Sciatic nerve (tissue), 2 donors: ENCODE measurements at regions of chr3 and their contacts with region 1.

Region 1: DNA sequence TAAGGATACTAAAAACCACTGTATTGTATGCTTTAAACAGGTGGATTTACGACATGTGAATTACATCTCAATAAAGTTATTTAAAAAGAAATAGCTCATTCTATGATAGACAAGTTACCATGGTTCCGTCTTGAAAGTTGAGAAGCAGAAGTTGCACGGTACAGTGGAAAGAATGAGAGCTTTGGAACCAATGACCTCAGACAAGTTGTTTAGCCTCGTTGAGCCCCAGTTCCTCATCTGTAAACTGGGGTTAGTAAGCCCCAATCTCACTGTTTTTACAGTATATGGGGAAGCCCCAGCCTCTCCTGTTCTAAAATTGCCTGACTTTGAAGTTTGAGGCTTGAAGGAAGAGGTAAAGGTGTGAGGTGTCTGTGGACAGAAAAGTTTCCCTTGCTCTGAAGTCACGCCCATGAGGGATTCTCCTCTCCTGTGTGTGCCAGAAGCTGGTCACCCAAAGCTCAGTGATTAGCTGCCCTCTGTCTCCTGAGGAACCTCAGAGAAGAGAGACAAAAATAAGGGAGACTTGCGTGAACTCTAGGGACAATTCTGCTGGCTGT is 10.0 kb downstream of the CRYGS start:
- DNase-seq: no peak
- ATAC-seq: peak; percentile 81

Region 2: GRCh38 chr3:185637388-185637787 is 896.8 kb before region 1 on chr3:
- intact Hi-C with region 1: no loop called
- DNase-seq: no peak
- ATAC-seq: no peak

Region 3: DNA sequence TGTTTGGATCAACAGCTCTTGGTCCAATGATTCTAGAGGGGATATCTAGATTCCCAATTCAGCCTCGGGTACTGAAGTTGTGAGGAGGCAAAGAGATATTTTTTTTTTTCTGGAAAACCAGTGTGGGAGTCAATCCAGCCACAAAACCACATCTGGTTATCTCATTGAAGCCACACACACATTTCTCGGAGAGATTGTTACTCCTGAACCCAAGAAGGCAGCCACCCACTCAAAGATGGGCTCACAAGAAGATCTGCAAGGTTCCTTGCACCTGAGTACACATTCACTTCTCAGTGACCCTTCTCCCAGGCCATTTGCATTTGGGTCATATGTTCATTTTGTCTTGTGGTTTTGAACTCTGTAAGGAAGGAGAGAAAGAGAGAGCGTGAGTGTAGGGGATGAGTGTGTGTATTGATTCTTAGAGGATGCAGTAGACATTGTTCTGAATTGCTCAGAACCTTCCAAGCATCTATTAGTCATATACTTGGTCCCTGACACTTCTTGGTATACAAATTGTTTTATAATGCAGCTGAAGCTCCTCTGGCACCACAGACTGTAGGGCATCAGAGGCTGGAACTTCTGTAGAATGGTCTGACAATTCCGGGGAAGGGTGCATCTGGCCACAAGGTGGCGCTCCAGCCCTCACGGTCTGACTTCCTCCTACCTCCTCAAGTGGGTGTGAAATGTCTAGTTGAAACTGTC is 557.1 kb before region 1 on chr3:
- intact Hi-C with region 1: loop called (anchors 5 kb)
- DNase-seq: peak; percentile 90
- ATAC-seq: peak; percentile 77

Region 4: GRCh38 chr3:186259612-186260383 is 274.4 kb before region 1 on chr3:
- intact Hi-C with region 1: loop called (anchors 10 kb)
- DNase-seq: peak; percentile 71
- ATAC-seq: peak; percentile 91

Region 5: DNA sequence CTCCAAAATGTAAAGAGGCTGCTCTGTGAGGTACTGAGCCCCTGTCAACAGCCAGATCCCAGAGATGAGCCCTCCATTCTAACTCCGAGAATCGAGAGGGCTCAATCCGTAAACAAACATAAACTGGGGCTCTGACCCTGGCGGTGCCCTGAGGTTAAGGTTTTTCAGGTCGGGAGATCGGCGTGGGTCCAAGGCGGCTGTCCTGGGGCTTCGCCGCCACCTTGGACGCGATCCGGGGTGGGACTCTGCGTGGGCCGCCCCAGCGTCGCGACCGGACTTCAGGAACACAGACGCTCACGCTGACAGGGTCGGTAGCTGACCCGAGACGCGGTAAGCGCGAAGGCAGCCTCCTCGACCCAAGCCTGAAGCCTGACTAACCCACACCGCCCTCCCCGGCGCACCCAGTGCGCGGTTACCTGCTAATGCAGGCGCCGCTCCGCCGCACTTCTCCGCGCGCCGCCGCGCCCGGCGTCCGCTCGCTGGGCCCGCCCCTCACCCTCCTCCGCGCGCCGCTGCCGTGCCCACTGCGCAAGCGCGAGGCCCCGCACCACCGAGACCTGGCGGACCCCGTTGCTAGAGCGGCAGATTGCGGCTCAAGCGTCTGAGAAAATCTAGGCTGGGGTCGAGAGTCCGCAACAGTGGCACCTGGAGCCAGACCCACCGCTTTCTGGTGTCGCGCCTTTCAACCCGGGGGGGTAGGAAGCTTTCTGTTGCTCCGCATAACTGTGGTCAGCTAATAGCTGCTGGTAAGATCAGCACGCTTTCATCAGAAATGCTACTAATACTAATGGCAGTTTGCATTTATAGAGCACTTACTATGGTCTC is 32.9 kb after region 1 on chr3 and contains the start of gene TBCCD1:
- intact Hi-C with region 1: no loop called
- DNase-seq: peak; percentile 94
- ATAC-seq: peak; percentile 81
- total RNA-seq, gene TBCCD1: 12.9 TPM

Region 6: DNA sequence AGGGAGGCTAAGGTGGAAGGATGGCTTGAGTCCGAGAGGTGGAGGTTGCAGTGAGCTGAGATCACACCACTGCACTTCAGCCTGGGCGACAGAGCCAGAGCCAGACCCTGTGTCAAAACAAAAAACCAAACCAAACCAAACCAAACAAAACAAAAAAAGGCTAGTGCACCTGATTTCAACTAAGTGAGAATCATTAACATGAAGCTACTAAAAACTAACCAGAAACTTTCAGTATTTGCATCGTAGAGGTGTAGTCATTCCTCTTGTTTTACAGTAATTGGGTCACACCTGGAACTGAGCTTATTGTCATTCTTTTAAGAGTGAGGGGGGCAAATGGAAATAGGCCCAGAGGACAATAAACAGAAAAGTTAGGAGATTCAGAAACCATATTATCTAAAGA is 454.6 kb after region 1 on chr3:
- intact Hi-C with region 1: no loop called
- DNase-seq: no peak
- ATAC-seq: no peak